MCF 10A (cell line): ENCODE measurements at regions of chr5 and their contacts with region 1.

Region 1: DNA sequence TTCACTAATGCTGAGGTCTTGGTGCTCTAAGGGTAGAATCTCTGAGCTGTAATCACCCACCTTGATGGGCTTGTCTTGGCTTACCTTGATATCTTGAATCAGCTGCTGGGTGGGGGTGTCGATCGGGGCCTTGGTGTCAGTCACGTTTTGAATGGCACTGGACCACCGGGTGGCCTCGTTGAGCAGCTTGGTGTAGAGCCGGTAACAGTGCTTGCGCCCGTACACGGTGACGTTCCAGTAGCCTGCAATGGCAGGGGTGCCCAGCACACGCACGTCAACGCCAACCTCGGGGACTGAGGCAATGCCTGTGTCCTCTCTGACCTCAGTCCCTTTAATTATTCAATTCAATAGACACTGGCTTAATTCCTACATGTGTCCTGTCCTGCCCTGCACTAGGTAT is 63.1 kb upstream of the RETREG1 start:
- DNase-seq: no peak
- H3K4me3 Mint-ChIP-seq: no peak overlapping the region
- H3K27ac Mint-ChIP-seq: no peak overlapping the region
- H3K4me1 Mint-ChIP-seq: peaks cover 4% of the 10 kb centered on the region
- H3K27me3 Mint-ChIP-seq: no peaks in the 10 kb centered on the region
- CTCF ChIP-seq: no peak

Region 2: GRCh38 chr5:15620501-15620900 is 1059.4 kb before region 1 on chr5:
- CTCF ChIA-PET with region 1: no interaction called
- POLR2A ChIA-PET with region 1: no interaction called
- intact Hi-C with region 1: no loop called
- DNase-seq: peak; percentile 66
- H3K4me3 Mint-ChIP-seq: no peak overlapping the region
- H3K27ac Mint-ChIP-seq: peak overlapping the region; percentile 49
- H3K4me1 Mint-ChIP-seq: peaks cover 5% of the 10 kb centered on the region
- H3K27me3 Mint-ChIP-seq: no peaks in the 10 kb centered on the region
- CTCF ChIP-seq: no peak

Region 3: GRCh38 chr5:16690243-16690852 is 10.5 kb after region 1 on chr5:
- CTCF ChIA-PET with region 1: interaction called, 16 read pairs
- POLR2A ChIA-PET with region 1: no interaction called
- intact Hi-C with region 1: no loop called
- DNase-seq: peak; percentile 59
- H3K4me3 Mint-ChIP-seq: no peak overlapping the region
- H3K27ac Mint-ChIP-seq: no peak overlapping the region
- H3K4me1 Mint-ChIP-seq: no peaks in the 10 kb centered on the region
- H3K27me3 Mint-ChIP-seq: no peaks in the 10 kb centered on the region
- CTCF ChIP-seq: peak; percentile 48